CD4-positive, alpha-beta memory T cell (primary cell): ENCODE measurements at regions of chr15 and their contacts with region 1.

Region 1: GRCh38 chr15:63514531-63514943 is 10.1 kb downstream of the USP3 start:
- DNase-seq: no peak
- H3K4me3 ChIP-seq: no peak overlapping the region
- H3K4me3 Mint-ChIP-seq: peak overlapping the region in 7 of 8 donors; percentile 33 to 84 (median 59)
- H3K27ac ChIP-seq: no peak overlapping the region
- H3K27ac Mint-ChIP-seq: peak overlapping the region; percentile 19 to 91 (median 70)
- H3K4me1 ChIP-seq: peaks cover 100% of the 10 kb centered on the region
- H3K4me1 Mint-ChIP-seq: peaks cover 67 to 97% (median 87%) of the 10 kb centered on the region in 4 donors
- H3K27me3 ChIP-seq: no peaks in the 10 kb centered on the region
- H3K27me3 Mint-ChIP-seq: no peaks in the 10 kb centered on the region

Region 2: DNA sequence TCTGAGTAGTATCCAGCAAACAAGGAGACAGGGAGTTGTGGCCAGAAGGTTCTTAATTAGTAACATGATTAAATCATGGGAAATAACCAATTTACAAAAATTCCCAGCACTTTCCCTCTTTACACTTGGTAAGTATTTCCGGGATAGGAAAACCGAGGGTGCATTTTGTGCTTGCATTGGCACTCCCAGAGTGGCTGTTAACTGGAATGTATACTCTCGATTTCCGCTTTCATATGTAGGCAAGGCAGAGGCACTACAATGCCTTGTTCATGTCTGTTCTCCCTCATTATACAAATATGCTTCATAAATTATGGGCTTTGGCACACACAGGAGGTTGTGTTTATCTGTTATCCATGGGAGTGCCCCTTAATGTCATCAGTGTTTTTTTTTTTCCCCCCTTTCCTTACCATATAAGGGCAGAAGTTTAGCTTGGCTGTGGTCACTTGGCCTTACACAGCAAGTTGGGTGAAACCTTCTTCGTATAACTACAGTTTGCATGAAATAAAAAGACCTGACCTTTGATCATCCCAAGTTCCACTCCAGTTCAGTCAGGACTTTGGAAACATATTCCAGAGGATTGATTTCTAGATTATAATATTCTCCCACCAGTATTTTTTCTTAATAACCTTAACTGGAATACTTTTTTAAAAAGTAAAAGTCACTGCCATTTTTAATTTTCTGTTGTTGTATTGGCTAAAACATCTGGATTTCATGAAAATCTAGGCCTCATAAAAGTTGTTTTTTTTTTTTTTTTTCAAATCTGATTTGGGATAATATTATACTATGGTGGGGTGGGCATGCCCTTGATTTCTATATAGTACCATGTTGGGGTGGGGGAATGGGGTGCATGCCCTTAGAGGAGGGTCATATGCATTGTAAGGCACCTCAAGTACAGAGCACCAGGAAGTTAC is 463.1 kb before region 1 on chr15:
- CTCF ChIA-PET with region 1: no interaction called
- POLR2A ChIA-PET with region 1: no interaction called
- intact Hi-C with region 1: no loop called
- DNase-seq: no peak
- H3K4me3 ChIP-seq: no peak overlapping the region
- H3K4me3 Mint-ChIP-seq: peak overlapping the region in 1 of 8 donors; percentile 46
- H3K27ac ChIP-seq: no peak overlapping the region
- H3K27ac Mint-ChIP-seq: no peak overlapping the region
- H3K4me1 ChIP-seq: peaks cover 19% of the 10 kb centered on the region
- H3K4me1 Mint-ChIP-seq: peaks cover 9 to 28% (median 17%) of the 10 kb centered on the region in 4 donors
- H3K27me3 ChIP-seq: peaks cover 3% of the 10 kb centered on the region
- H3K27me3 Mint-ChIP-seq: peaks cover 3 to 8% of the 10 kb centered on the region in 2 donors

Region 3: DNA sequence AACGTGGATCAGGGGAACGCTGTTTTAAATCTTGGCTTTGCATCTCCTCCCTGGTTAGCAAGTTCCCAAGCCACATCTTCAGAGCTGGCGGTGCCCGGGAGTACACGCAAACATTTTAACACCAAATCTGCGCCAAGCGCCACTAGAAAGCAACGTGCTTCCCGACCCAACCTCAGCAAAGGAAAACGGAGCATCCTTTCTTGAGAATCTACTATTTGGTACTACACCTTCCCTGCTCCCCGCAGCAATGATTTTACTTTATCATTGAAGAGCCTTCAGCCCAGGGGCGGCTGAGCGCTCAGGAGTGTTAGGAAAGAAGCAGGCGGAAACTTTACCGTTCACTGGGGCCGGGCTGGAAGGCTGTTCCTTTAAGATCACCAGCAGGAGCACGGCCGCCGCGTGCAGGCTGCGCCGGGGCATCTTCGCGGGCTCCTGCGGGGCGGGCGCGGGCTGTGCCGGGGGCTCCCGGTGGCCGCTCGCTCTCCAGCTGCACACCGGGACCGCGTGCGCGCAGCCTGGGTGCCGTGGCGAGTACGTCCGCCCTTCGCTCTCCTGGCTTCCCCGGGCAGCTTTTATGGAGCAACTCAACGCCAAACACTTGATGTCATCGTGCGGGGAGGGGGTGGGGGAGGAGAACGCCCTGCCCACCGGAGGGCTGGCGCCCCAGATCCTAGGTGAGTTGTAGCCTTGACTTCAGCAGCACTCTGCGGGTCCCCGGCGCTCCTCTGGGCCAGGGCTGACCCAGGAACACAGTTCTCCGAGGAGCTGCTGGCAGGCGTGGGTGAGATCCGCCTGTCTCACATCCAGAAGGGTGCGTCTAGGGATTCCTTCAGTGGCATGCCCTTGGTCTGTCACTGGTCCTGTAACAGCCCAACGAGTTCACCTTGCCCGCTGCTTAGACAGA is 133.0 kb before region 1 on chr15 and contains the start of gene CA12:
- CTCF ChIA-PET with region 1: no interaction called
- POLR2A ChIA-PET with region 1: no interaction called
- intact Hi-C with region 1: no loop called
- DNase-seq: no peak
- H3K4me3 ChIP-seq: no peak within 1 kb of the TSS
- H3K4me3 Mint-ChIP-seq: peak within 1 kb of the TSS; percentile 54 to 75 (median 67)
- H3K27ac ChIP-seq: no peak within 1 kb of the TSS
- H3K27ac Mint-ChIP-seq: peak within 1 kb of the TSS in 1 of 7 donors; percentile 7
- H3K4me1 ChIP-seq: peaks cover 9% of the 10 kb centered on the region
- H3K4me1 Mint-ChIP-seq: peaks cover 9 to 14% (median 10%) of the 10 kb centered on the region in 4 donors
- H3K27me3 ChIP-seq: peaks cover 3% of the 10 kb centered on the region
- H3K27me3 Mint-ChIP-seq: peaks cover 41 to 66% of the 10 kb centered on the region in 2 donors
- total RNA-seq, gene CA12: not detected

Region 4: GRCh38 chr15:63473999-63474809 is 40.3 kb before region 1 on chr15:
- CTCF ChIA-PET with region 1: interaction called, 10 read pairs
- POLR2A ChIA-PET with region 1: interaction called, 17 read pairs
- intact Hi-C with region 1: no loop called
- DNase-seq: peak in 4 of 5 donors; percentile 51 to 87 (median 60)
- H3K4me3 ChIP-seq: no peak overlapping the region
- H3K4me3 Mint-ChIP-seq: peak overlapping the region in 6 of 8 donors; percentile 62 to 86 (median 78)
- H3K27ac ChIP-seq: peak overlapping the region; percentile 43
- H3K27ac Mint-ChIP-seq: peak overlapping the region; percentile 87 to 99 (median 97)
- H3K4me1 ChIP-seq: peaks cover 59% of the 10 kb centered on the region
- H3K4me1 Mint-ChIP-seq: peaks cover 38 to 58% (median 54%) of the 10 kb centered on the region in 4 donors
- H3K27me3 ChIP-seq: no peaks in the 10 kb centered on the region
- H3K27me3 Mint-ChIP-seq: no peaks in the 10 kb centered on the region

Region 5: DNA sequence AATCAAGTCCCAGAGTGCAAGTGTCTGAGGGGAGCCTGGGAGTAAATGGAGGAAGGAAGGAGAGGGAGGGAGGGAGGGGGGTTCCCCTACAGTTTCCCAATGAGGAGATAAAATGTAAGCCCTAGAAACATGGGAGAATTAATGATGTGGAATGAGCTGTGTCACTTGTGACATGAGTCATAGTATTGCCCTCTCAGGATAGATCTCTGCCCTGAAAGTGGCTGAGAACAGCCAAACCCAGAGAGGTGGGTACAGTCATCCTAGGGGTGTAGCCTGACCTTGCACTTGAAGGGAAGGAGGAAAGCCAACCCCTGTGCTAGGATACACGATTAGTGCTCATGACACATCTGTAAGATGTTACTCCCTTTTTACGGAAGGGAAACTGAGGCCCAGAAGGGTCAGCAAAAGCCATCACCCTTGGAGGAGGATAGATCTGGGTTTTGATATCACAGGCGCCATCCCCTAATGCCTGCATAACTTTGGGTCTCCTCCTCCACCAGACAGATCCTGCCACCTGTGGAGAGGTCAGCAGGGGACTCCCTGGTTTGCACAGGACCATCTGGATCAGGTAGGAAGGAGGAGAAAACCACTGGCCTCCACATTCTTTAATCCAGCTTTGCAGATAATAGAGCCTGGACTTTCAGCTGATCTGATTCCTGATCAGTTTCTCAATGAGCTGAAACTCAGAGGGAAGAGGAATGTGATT is 33.3 kb before region 1 on chr15:
- CTCF ChIA-PET with region 1: interaction called, 10 read pairs
- POLR2A ChIA-PET with region 1: interaction called, 17 read pairs
- intact Hi-C with region 1: no loop called
- DNase-seq: peak in 1 of 5 donors; percentile 60
- H3K4me3 ChIP-seq: no peak overlapping the region
- H3K4me3 Mint-ChIP-seq: peak overlapping the region in 6 of 8 donors; percentile 31 to 84 (median 78)
- H3K27ac ChIP-seq: peak overlapping the region; percentile 81
- H3K27ac Mint-ChIP-seq: peak overlapping the region; percentile 92 to 100 (median 100)
- H3K4me1 ChIP-seq: peaks cover 97% of the 10 kb centered on the region
- H3K4me1 Mint-ChIP-seq: peaks cover 52 to 85% (median 70%) of the 10 kb centered on the region in 4 donors
- H3K27me3 ChIP-seq: no peaks in the 10 kb centered on the region
- H3K27me3 Mint-ChIP-seq: no peaks in the 10 kb centered on the region